Activated T-helper 2 cell treated with anti-CD3 and anti-CD28 coated beads, Interferon-gamma antibody, Interleukin-2, Interleukin-4, amounts not matched to agents 10 μg/mL and 5 μg/mL and 100 μg/mL, durations not matched to agents 14 hours and 24 hours and 36 hours (primary cell): ENCODE measurements at regions of chr14 and their contacts with region 1.

Region 1: GRCh38 chr14:45083971-45084722 is at the start of gene PRPF39:
- DNase-seq: peak; percentile 94
- H3K4me3 Mint-ChIP-seq: peak within 1 kb of the TSS; percentile 97
- H3K27ac Mint-ChIP-seq: peak within 1 kb of the TSS; percentile 97
- H3K4me1 Mint-ChIP-seq: peaks cover 46% of the 10 kb centered on the region
- H3K27me3 Mint-ChIP-seq: no peaks in the 10 kb centered on the region
- total RNA-seq, gene PRPF39: 47.6 and 47.8 TPM in 2 replicates

Region 2: GRCh38 chr14:44897045-44897844 is 186.9 kb before region 1 on chr14:
- intact Hi-C with region 1: loop called (anchors 1 kb)
- DNase-seq: peak; percentile 86
- H3K4me3 Mint-ChIP-seq: peak overlapping the region; percentile 92
- H3K27ac Mint-ChIP-seq: peak overlapping the region; percentile 92
- H3K4me1 Mint-ChIP-seq: peaks cover 13% of the 10 kb centered on the region
- H3K27me3 Mint-ChIP-seq: no peaks in the 10 kb centered on the region

Region 3: DNA sequence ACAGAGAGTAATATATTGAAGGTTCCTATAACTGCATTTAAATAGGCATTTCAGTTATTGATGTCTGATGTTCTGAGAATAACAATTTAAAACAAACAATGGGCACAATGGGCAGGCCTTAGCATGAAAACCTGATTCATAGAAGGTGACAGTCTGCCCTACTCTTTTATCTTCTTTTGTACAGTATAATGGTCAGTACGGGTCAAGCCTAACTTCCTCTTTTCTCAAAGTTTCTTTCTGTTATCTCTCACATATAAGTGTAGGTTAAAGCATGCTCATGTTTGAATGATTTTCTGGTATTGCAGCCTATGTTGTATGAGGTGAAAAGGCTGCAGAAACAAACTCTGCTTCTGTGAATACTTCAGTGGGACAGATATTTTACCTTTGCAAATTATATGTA is 35.9 kb after region 1 on chr14:
- intact Hi-C with region 1: no loop called
- DNase-seq: no peak
- H3K4me3 Mint-ChIP-seq: no peak overlapping the region
- H3K27ac Mint-ChIP-seq: no peak overlapping the region
- H3K4me1 Mint-ChIP-seq: no peaks in the 10 kb centered on the region
- H3K27me3 Mint-ChIP-seq: no peaks in the 10 kb centered on the region